ENCODE measurements at regions of chr11 and their contacts with region 1.

Region 1: GRCh38 chr11:44286268-44286880 is 23.6 kb downstream of the ALX4 start:
- DNase-seq: peak; percentile 86
- H3K4me3 ChIP-seq: no peak overlapping the region
- H3K27ac ChIP-seq: no peak overlapping the region; a peak in 1 of 4 replicates
- H3K4me1 ChIP-seq: peaks cover 0 to 6% of the 10 kb centered on the region in 2 experiments; a peak in 2 of 4 replicates
- H3K27me3 ChIP-seq: no peaks in the 10 kb centered on the region
- CTCF ChIP-seq: peak; percentile 93
- EP300 ChIP-seq: no peak
- RAD21 ChIP-seq: peak; percentile 93

Region 2: DNA sequence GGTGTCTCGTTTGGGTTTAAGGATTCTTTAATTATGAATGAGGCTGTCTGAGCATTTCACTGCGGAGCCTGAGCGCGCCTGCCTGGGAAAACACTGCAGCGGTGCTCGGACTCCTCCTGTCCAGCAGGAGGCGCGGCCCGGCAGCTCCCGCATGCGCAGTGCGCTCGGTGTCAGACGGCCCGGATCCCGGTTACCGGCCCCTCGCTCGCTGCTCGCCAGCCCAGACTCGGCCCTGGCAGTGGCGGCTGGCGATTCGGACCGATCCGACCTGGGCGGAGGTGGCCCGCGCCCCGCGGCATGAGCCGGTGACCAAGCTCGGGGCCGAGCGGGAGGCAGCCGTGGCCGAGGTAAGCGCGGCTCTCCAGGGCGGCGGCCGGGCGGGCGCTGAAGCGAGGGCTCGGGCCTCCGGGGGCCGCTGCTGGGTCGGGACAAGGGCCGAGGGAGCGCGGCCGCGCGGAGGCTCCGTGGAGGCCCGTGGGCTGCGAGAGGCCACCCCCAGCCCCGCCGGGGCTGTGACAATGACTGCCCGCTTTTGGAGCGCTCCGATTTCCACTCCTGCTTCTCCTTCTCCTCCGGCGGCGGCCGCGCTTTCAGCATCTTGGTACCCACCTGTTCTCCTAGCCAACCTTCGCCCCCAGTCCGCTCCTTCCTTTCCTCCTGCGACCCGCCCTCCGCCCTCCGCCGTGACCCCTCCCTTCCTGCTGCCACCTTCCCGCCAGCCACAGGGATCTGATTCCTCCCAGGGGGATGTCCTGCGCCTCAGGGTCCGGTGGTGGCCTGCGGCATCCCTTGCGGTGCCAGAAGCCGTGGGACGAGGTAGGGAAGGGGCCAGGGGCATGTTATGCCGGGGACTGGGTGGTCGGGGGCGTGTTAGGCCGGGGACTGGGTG is 190.6 kb before region 1 on chr11 and contains the start of gene EXT2:
- CTCF ChIA-PET with region 1: interaction called, 13 read pairs
- POLR2A ChIA-PET with region 1: no interaction called
- DNase-seq: peak; percentile 97
- H3K4me3 ChIP-seq: peak within 1 kb of the TSS; percentile 71 to 91
- H3K27ac ChIP-seq: peak within 1 kb of the TSS; percentile 24 to 48; a peak in 2 of 4 replicates
- H3K4me1 ChIP-seq: peaks cover 3 to 9% of the 10 kb centered on the region in 2 experiments; a peak in 3 of 4 replicates
- H3K27me3 ChIP-seq: no peaks in the 10 kb centered on the region
- CTCF ChIP-seq: peak; percentile 80
- EP300 ChIP-seq: no peak
- RAD21 ChIP-seq: no peak
- polyA plus RNA-seq, gene EXT2: 92.9 and 96.7 TPM in 2 replicates

Region 3: DNA sequence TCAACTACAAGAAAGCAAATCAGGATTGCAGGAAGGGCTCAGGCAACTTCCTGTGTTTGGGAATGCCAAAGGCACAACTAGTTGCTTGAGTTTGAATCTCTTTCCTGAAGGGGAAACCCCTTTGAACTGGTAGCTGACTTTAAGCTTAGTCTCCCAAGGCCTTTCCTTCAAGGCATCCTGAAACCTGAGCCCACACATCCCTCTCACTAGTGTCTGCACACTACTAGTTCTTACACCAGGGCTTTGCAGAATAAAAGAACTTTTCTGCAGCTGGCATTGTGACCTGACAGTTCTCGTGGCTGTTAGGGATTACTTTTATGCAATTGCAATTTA is 95.5 kb before region 1 on chr11:
- CTCF ChIA-PET with region 1: interaction called, 10 read pairs
- POLR2A ChIA-PET with region 1: no interaction called
- DNase-seq: no peak
- H3K4me3 ChIP-seq: no peak overlapping the region
- H3K27ac ChIP-seq: peak overlapping the region in 1 of 2 experiments; percentile 47; a peak in 1 of 4 replicates
- H3K4me1 ChIP-seq: peaks cover 29 to 47% of the 10 kb centered on the region in 2 experiments; a peak in 3 of 4 replicates
- H3K27me3 ChIP-seq: no peaks in the 10 kb centered on the region
- CTCF ChIP-seq: no peak
- EP300 ChIP-seq: no peak
- RAD21 ChIP-seq: no peak

Region 4: DNA sequence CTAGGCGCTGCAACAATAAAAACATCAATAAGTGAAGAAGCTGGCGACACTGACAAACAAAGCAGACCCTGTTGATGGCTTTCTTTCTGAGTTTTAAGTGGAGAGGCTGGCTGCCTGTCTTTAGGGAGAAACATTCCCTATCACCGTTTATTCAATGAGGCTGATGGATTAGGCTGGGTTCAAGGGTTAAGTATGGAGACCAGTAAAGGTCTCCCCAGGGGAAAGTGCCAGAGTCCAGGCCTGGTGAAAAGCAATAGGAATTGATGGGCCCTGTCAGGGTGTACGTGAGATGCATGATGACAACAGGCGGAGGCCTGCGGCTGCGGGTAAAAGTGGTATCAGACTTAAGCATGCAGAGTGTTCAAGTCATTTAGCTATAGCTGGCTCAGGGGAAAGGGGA is 79.1 kb before region 1 on chr11:
- CTCF ChIA-PET with region 1: no interaction called
- POLR2A ChIA-PET with region 1: no interaction called
- DNase-seq: no peak
- H3K4me3 ChIP-seq: no peak overlapping the region
- H3K27ac ChIP-seq: no peak overlapping the region
- H3K4me1 ChIP-seq: no peaks in the 10 kb centered on the region; a peak in 1 of 4 replicates
- H3K27me3 ChIP-seq: no peaks in the 10 kb centered on the region
- CTCF ChIP-seq: no peak
- EP300 ChIP-seq: no peak
- RAD21 ChIP-seq: no peak

Region 5: GRCh38 chr11:44298862-44299261 is 12.5 kb after region 1 on chr11:
- CTCF ChIA-PET with region 1: interaction called, 16 read pairs
- POLR2A ChIA-PET with region 1: no interaction called
- DNase-seq: no peak
- H3K4me3 ChIP-seq: no peak overlapping the region
- H3K27ac ChIP-seq: no peak overlapping the region
- H3K4me1 ChIP-seq: no peaks in the 10 kb centered on the region; a peak in 1 of 4 replicates
- H3K27me3 ChIP-seq: peaks cover 9% of the 10 kb centered on the region
- CTCF ChIP-seq: no peak
- EP300 ChIP-seq: no peak
- RAD21 ChIP-seq: no peak

Region 6: DNA sequence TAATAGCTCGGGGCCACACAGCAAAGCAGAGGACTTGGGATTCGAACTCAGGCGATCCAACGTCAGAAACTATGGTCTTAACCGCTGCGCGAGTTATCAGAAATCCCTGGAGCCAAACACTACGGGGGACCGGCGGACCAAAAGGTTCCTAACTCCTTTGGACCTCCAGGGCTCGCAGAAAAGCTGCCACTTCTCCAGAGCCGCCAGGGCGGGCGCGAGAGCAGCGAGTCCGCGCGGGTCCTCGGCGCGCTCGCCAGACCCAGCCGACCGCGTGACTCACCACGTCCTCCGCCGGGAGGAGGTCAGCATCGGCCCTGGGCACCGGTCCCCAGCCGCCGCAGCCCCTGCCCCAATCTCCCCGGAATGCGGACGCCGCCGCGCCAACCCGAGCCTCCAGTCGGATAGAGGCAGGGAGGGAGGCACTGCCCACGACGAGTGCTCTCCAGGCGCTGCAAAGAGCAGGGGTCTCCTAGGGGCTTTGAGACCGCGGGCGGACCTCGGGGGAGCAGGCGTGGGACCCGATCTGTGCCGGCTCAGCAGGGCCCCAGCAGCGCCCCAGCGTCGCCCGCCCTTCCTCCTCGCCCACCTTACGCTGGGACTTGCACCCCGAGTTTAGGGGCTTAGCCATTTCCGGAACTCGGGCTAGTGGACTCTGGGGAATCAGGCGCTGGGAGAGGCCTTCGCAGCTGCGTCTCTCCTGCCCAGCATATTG is 29.7 kb after region 1 on chr11:
- CTCF ChIA-PET with region 1: interaction called, 18 read pairs
- POLR2A ChIA-PET with region 1: no interaction called
- DNase-seq: peak; percentile 82
- H3K4me3 ChIP-seq: peak overlapping the region; percentile 39 to 41
- H3K27ac ChIP-seq: no peak overlapping the region
- H3K4me1 ChIP-seq: peaks cover 10 to 15% of the 10 kb centered on the region in 2 experiments; a peak in 2 of 4 replicates
- H3K27me3 ChIP-seq: peaks cover 99% of the 10 kb centered on the region
- CTCF ChIP-seq: peak; percentile 22; the same call in 1 of the 2 replicates
- EP300 ChIP-seq: no peak
- RAD21 ChIP-seq: no peak

Region 7: DNA sequence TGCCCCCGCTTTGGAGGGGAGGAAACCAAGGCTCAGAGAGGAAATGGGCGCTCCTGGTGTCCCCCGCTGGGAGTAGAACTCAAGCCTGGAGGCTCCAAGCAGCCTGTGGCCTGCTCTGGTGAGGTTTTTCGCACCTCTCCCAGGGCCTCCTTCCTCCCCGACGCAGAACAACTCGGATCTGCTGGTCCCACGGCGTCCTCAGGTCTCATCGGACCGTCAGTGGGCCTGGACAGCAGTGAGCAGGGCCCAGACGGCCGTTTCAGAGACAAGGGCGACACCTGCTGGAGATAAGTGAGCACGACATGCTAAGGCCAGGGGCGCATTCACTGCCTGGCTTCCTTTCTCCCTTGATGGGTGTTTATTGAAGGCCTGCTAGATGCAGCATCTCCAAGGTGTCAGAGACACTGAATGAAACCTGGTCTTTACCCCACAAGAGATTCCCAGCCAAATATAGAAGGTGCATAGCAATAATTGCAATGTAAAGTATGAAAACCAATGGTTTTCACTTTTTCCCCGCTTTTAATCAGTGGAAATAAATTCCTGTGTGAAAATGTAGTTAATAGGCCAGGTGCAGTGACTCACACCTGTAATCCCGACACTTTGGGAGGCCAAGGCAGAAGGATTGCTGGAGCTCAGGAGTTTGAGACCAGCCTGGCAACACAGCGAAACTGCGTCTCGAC is 252.1 kb after region 1 on chr11:
- CTCF ChIA-PET with region 1: interaction called, 148 read pairs
- POLR2A ChIA-PET with region 1: no interaction called
- DNase-seq: peak; percentile 90
- H3K4me3 ChIP-seq: peak overlapping the region in 1 of 2 experiments; percentile 17; a peak in 1 of 4 replicates
- H3K27ac ChIP-seq: no peak overlapping the region
- H3K4me1 ChIP-seq: peaks cover 0 to 2% of the 10 kb centered on the region in 2 experiments; a peak in 1 of 4 replicates
- H3K27me3 ChIP-seq: no peaks in the 10 kb centered on the region
- CTCF ChIP-seq: peak; percentile 93
- EP300 ChIP-seq: no peak
- RAD21 ChIP-seq: peak; percentile 99

Measured in SK-N-SH (cell line).